ENCODE measurements at regions of chr1 and their contacts with region 1.

Region 1: DNA sequence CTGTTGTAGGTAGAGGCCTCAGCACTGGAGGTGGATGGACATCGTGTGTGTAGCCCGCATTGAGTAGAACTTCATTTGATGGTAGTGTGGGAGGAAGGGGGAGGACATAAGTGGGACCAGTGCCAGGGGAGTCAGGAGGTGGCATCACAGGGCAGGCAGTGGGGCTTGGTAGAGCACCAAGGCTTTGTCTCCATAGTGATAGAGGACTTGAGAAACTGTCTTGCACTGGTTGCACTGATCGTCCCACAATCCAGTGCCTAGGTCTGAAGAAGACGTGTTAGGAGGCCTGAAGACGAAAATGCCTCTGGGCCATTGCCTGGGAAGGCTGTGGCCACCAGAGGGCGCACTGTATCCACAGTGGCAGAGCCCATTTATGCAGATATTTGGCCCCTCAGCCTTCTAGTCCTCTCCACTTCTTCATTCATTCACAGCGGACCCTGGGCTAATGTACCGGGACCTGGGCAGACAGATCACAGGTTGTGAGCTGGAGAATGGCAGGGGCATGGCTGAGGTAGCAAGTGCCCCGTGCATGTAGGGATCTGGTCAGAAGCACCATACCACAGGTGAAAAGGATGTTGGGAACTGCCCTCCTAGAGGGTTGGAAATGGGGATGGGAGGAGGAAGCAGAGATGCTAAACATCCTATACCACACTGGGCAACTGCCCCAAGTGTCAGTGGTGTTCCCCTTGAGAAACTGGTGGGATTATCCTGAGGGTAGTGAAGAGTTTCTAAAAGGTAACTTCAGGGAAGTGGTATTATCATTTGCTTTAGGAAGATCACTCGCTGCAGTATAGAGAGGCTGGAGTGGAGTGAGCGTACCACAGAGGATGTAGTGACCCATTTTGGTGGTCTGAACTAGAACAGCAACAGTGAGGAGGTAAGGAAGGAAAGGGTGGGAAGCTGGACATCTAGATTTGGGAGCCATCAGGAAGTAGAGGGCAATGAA is 95.3 kb downstream of the PIK3R3 start:
- DNase-seq: peak; percentile 85
- H3K4me3 ChIP-seq: no peak overlapping the region
- H3K27ac ChIP-seq: no peak overlapping the region
- H3K4me1 ChIP-seq: 0 out of 2 replicates have a peak, but pooled peaks cover 7% of the 10 kb centered on the region
- H3K27me3 ChIP-seq: no peaks in the 10 kb centered on the region

Region 2: GRCh38 chr1:46179138-46180081 is 142.2 kb after region 1 on chr1:
- in situ Hi-C with region 1: loop called (anchors 5 kb)
- DNase-seq: peak; percentile 92
- H3K4me3 ChIP-seq: no peak overlapping the region
- H3K27ac ChIP-seq: no peak overlapping the region
- H3K4me1 ChIP-seq: peaks cover 39% of the 10 kb centered on the region
- H3K27me3 ChIP-seq: no peaks in the 10 kb centered on the region